Dendritic cell treated with granulocyte-macrophage colony-stimulating factor and Interleukin-4, amounts not matched to agents 40 ng/mL and 50 ng/mL, for 4 days (primary cell): ENCODE measurements at regions of chr22 and their contacts with region 1.

Region 1: GRCh38 chr22:46035742-46036557 is 59.0 kb upstream of the WNT7B start:
- H3K4me3 Mint-ChIP-seq: peak overlapping the region; percentile 87
- H3K27ac Mint-ChIP-seq: peak overlapping the region; percentile 91
- H3K4me1 Mint-ChIP-seq: peaks cover 36% of the 10 kb centered on the region
- H3K27me3 Mint-ChIP-seq: no peaks in the 10 kb centered on the region

Region 2: GRCh38 chr22:45863981-45864751 is 171.8 kb before region 1 on chr22:
- intact Hi-C with region 1: no loop called
- H3K4me3 Mint-ChIP-seq: no peak overlapping the region
- H3K27ac Mint-ChIP-seq: no peak overlapping the region
- H3K4me1 Mint-ChIP-seq: no peaks in the 10 kb centered on the region
- H3K27me3 Mint-ChIP-seq: peaks cover 65% of the 10 kb centered on the region

Region 3: GRCh38 chr22:46013460-46014416 is 22.2 kb before region 1 on chr22:
- intact Hi-C with region 1: loop called (anchors 2 kb)
- H3K4me3 Mint-ChIP-seq: peak overlapping the region; percentile 87
- H3K27ac Mint-ChIP-seq: peak overlapping the region; percentile 96
- H3K4me1 Mint-ChIP-seq: peaks cover 41% of the 10 kb centered on the region
- H3K27me3 Mint-ChIP-seq: no peaks in the 10 kb centered on the region